ENCODE measurements at regions of chr10 and their contacts with region 1.

Region 1: DNA sequence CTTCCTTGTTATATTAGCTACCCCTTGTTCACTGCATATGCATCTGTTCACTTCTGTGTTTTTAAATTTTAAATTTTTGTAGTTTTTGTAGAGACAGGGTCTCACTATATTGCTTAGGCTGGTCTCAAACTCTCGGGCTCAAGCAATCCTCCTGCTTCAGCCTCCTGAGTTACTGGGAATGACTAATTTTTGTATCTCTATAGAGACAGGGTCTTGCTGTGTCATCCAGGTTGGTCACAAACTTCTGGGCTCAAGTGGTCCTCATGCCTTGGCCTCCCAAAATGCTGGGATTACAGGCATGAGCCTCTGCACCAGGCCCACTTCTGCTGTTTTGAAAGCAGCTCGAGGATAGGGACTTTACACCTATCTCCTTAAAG is 64.6 kb downstream of the PRTFDC1 start:
- DNase-seq: no peak
- H3K4me3 Mint-ChIP-seq: peak overlapping the region; percentile 60
- H3K27ac Mint-ChIP-seq: no peak overlapping the region
- H3K4me1 Mint-ChIP-seq: peaks cover 26% of the 10 kb centered on the region
- H3K27me3 Mint-ChIP-seq: no peaks in the 10 kb centered on the region

Region 2: DNA sequence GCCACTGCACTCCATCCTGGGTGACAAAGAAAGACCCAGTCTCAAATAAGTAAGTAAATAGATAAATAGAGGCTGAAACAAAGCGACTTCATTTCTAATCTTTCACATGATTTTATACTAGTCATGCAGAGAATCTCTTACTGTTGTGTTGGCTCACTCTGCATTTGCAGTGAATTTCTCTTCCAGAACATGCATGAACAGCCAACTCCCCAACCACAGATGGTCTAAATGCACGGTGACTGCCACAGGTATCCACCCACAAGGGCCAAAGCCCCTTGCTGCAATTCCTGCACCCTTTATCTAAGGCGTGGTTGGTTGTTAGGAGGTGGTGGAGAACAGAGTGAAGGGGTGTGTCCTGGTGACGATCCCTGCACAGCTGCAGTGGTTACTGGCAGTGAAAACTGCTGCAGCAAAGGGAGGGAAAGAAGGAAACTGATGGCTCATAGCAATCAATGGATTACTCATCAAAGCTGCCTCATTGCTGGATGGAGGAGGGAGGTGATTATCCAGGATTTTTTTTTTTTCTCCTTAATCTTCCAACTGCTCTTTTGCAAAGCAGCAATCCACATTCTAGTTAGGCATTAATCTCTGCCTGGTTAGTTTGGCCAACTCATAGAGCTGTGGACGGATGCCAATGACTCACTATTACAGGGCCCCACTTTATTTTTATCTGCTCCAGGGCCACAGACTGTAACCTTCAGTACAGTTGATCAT is 14.0 kb after region 1 on chr10:
- intact Hi-C with region 1: loop called (anchors 1 kb)
- DNase-seq: no peak
- H3K4me3 Mint-ChIP-seq: peak overlapping the region; percentile 62
- H3K27ac Mint-ChIP-seq: peak overlapping the region; percentile 85
- H3K4me1 Mint-ChIP-seq: peaks cover 30% of the 10 kb centered on the region
- H3K27me3 Mint-ChIP-seq: no peaks in the 10 kb centered on the region

Region 3: GRCh38 chr10:25174461-25175230 is 286.8 kb after region 1 on chr10 and contains the start of gene GPR158:
- intact Hi-C with region 1: no loop called
- DNase-seq: peak; percentile 88
- H3K4me3 Mint-ChIP-seq: peak within 1 kb of the TSS; percentile 3
- H3K27ac Mint-ChIP-seq: peak within 1 kb of the TSS; percentile 60
- H3K4me1 Mint-ChIP-seq: peaks cover 4% of the 10 kb centered on the region
- H3K27me3 Mint-ChIP-seq: peaks cover 32% of the 10 kb centered on the region
- total RNA-seq, gene GPR158: not detected in 2 replicates